CD14-positive monocyte (primary cell): ENCODE measurements at regions of chr7 and their contacts with region 1.

Region 1: DNA sequence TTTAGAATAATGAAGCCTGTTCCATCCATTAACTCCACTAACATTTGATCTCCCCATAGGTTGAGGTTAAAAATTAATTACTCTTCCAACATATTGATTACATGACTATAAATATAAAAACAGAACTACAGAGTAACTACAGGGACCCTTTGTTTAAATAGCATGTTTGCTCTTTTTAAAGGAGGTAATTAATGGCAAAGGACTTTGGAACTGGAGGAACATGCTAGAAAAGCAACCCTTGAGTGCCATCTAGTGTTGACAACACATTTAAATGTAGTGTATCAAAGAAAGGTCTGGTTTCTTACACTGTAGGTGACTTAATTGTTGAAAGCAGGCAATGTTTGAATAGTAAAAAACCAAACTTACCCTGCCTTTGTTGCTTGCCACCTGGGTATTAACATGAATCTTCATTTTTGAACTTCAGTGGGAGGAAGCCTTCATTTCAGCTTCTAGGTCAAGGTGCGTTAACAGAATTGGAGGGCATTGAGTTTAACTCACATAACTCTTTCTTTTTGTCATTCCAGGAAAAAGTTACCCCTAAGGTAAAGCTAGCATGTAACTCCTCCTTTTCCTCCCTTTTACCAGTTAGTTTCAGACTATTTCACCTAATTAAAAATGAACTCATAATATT is 52.6 kb upstream of the CAPZA2 start:
- DNase-seq: peak; percentile 30 to 63 (median 52)
- H3K4me3 ChIP-seq: no peak overlapping the region
- H3K4me3 Mint-ChIP-seq: no peak overlapping the region
- H3K27ac ChIP-seq: no peak overlapping the region
- H3K27ac Mint-ChIP-seq: no peak overlapping the region
- H3K4me1 ChIP-seq: peaks cover 0 to 12% of the 10 kb centered on the region in 2 donors
- H3K4me1 Mint-ChIP-seq: peaks cover 11% of the 10 kb centered on the region
- H3K27me3 ChIP-seq: no peaks in the 10 kb centered on the region
- H3K27me3 Mint-ChIP-seq: peaks cover 0 to 1% (median 0%) of the 10 kb centered on the region in 3 donors
- CTCF ChIP-seq: peak; percentile 82

Region 2: GRCh38 chr7:116173051-116174028 is 636.4 kb before region 1 on chr7:
- intact Hi-C with region 1: loop called in 1 of 2 experiments (anchors 10 kb)
- DNase-seq: peak; percentile 51 to 73 (median 54)
- H3K4me3 ChIP-seq: no peak overlapping the region
- H3K4me3 Mint-ChIP-seq: no peak overlapping the region
- H3K27ac ChIP-seq: no peak overlapping the region
- H3K27ac Mint-ChIP-seq: no peak overlapping the region
- H3K4me1 ChIP-seq: no peaks in the 10 kb centered on the region
- H3K4me1 Mint-ChIP-seq: no peaks in the 10 kb centered on the region
- H3K27me3 ChIP-seq: no peaks in the 10 kb centered on the region
- H3K27me3 Mint-ChIP-seq: no peaks in the 10 kb centered on the region
- CTCF ChIP-seq: peak; percentile 82

Region 3: DNA sequence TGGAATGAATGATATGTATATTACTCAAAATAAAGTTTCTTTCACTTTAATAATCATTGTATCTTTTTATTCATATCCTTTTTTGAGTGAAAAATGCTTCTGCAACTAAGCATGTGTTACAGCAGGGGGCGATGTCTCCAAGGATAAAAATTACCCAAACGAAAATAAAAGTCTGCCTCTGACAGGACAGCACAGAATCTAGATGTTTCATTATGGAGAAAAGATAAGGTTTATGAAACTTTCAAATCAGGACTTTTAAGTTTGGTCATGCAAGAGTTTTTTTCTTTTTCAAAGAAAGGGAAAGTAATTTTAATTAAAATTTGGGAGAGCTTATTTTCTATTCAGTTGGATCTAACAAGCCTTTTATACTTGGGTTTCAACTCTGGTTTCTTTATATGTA is 551.0 kb before region 1 on chr7:
- intact Hi-C with region 1: loop called in 1 of 2 experiments (anchors 5 kb)
- DNase-seq: peak; percentile 11 to 31 (median 21)
- H3K4me3 ChIP-seq: no peak overlapping the region
- H3K4me3 Mint-ChIP-seq: no peak overlapping the region
- H3K27ac ChIP-seq: no peak overlapping the region
- H3K27ac Mint-ChIP-seq: no peak overlapping the region
- H3K4me1 ChIP-seq: no peaks in the 10 kb centered on the region
- H3K4me1 Mint-ChIP-seq: peaks cover 1% of the 10 kb centered on the region
- H3K27me3 ChIP-seq: no peaks in the 10 kb centered on the region
- H3K27me3 Mint-ChIP-seq: peaks cover 0 to 1% (median 0%) of the 10 kb centered on the region in 3 donors
- CTCF ChIP-seq: peak; percentile 82

Region 4: DNA sequence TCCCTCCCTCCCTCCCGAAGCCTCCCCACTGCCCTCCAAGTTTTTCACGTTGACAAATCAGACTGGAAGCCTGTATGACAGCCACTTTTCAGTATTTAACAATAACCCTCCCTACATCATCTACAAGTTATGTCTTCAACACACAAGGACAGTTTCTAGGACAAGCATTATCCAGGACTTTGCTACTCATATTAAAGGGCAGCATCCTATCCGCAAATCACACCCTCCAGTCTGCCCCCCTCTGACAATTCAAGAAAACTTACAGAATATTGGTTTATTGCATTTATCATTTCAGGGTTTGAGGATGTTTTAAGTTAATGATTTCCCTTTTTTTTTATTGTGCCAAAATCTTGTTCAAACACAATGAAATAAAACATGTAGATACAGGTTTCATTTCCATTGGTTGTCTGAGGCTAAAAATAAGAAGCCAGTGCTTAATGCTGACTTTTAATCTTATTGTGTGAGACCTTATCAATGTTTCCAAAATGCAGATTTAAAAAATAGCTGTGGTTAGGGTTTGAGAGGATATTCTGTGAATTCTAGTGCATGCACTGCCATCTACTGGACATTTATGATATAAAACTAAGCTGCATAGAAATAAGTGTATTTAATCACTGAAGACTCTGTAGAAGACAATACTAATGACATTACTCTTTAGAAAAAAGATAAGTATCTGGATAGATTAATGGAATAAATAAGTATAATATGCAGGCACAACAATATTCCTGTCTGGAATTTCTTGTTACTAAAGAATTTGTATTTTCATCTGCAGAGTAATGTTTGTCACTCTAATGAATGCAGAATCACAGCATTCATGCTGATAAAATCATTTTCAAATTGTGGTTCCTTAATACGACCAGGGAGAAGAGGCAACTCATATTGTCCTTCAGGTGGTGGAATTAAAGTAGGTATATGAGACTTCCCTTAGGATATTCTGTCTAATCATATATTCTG is 220.8 kb before region 1 on chr7:
- intact Hi-C with region 1: loop called (anchors 5 to 10 kb)
- DNase-seq: peak in 2 of 3 donors; percentile 24 to 55
- H3K4me3 ChIP-seq: no peak overlapping the region
- H3K4me3 Mint-ChIP-seq: no peak overlapping the region
- H3K27ac ChIP-seq: no peak overlapping the region
- H3K27ac Mint-ChIP-seq: peak overlapping the region in 1 of 7 donors; percentile 17
- H3K4me1 ChIP-seq: peaks cover 20 to 30% of the 10 kb centered on the region in 2 donors
- H3K4me1 Mint-ChIP-seq: peaks cover 28% of the 10 kb centered on the region
- H3K27me3 ChIP-seq: peaks cover 23 to 27% of the 10 kb centered on the region in 2 donors
- H3K27me3 Mint-ChIP-seq: peaks cover 8 to 21% (median 15%) of the 10 kb centered on the region in 3 donors
- CTCF ChIP-seq: peak; percentile 93

Region 5: DNA sequence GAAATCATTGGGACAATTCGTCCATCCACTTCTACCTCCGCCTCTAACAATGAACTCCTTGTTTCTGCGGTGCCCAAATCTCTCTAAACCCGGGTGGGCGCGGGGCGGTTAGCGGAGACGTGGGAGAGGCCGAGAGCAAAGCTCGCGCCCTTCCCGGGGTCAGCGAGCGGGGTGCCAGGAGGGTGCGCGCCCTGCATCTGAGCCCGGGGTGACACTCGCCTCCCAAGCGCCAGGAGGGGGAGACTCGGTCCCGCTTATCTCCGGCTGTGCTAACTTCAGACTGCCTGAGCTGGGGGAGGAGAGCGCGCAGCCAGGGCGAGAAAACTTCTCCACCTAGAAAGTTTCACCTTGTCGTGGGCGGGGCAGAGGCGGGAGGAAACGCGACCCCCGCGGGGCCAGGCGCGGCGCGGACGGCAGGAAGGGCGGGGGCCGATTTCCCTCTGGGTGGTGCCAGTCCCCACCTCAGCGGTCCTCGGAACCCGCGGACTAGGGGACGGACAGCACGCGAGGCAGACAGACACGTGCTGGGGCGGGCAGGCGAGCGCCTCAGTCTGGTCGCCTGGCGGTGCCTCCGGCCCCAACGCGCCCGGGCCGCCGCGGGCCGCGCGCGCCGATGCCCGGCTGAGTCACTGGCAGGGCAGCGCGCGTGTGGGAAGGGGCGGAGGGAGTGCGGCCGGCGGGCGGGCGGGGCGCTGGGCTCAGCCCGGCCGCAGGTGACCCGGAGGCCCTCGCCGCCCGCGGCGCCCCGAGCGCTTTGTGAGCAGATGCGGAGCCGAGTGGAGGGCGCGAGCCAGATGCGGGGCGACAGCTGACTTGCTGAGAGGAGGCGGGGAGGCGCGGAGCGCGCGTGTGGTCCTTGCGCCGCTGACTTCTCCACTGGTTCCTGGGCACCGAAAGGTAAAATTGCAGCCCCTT is 137.8 kb before region 1 on chr7 and contains the start of gene MET:
- intact Hi-C with region 1: loop called (anchors 5 to 10 kb)
- DNase-seq: peak; percentile 40 to 74 (median 64)
- H3K4me3 ChIP-seq: peak within 1 kb of the TSS; percentile 14 to 71 (median 16)
- H3K4me3 Mint-ChIP-seq: peak within 1 kb of the TSS; percentile 70 to 91
- H3K27ac ChIP-seq: no peak within 1 kb of the TSS
- H3K27ac Mint-ChIP-seq: peak within 1 kb of the TSS in 4 of 7 donors; percentile 24 to 82 (median 46)
- H3K4me1 ChIP-seq: peaks cover 11 to 15% of the 10 kb centered on the region in 2 donors
- H3K4me1 Mint-ChIP-seq: peaks cover 13% of the 10 kb centered on the region
- H3K27me3 ChIP-seq: peaks cover 36 to 47% of the 10 kb centered on the region in 2 donors
- H3K27me3 Mint-ChIP-seq: peaks cover 29 to 50% (median 41%) of the 10 kb centered on the region in 3 donors
- CTCF ChIP-seq: peak; percentile 50
- polyA plus RNA-seq, gene MET: not detected

Region 6: GRCh38 chr7:116859323-116859722 is 49.6 kb after region 1 on chr7:
- intact Hi-C with region 1: loop called in 1 of 2 experiments (anchors 5 kb)
- DNase-seq: peak; percentile 65 to 94 (median 85)
- H3K4me3 ChIP-seq: peak overlapping the region in 1 of 3 experiments; percentile 39
- H3K4me3 Mint-ChIP-seq: peak overlapping the region in 1 of 2 donors; percentile 73
- H3K27ac ChIP-seq: peak overlapping the region in 1 of 2 donors; percentile 80
- H3K27ac Mint-ChIP-seq: peak overlapping the region; percentile 76 to 97 (median 95)
- H3K4me1 ChIP-seq: peaks cover 31 to 45% of the 10 kb centered on the region in 2 donors
- H3K4me1 Mint-ChIP-seq: peaks cover 36% of the 10 kb centered on the region
- H3K27me3 ChIP-seq: no peaks in the 10 kb centered on the region
- H3K27me3 Mint-ChIP-seq: peaks cover 0 to 5% (median 5%) of the 10 kb centered on the region in 3 donors
- CTCF ChIP-seq: no peak